CD4-positive, alpha-beta memory T cell (primary cell): ENCODE measurements at regions of chr9 and their contacts with region 1.

Region 1: GRCh38 chr9:107465467-107466451 is 23.8 kb downstream of the KLF4 start:
- DNase-seq: no peak
- H3K4me3 ChIP-seq: no peak overlapping the region
- H3K4me3 Mint-ChIP-seq: peak overlapping the region; percentile 8 to 65 (median 52)
- H3K27ac ChIP-seq: no peak overlapping the region
- H3K27ac Mint-ChIP-seq: no peak overlapping the region
- H3K4me1 ChIP-seq: no peaks in the 10 kb centered on the region
- H3K4me1 Mint-ChIP-seq: peaks cover 0 to 10% (median 5%) of the 10 kb centered on the region in 4 donors
- H3K27me3 ChIP-seq: no peaks in the 10 kb centered on the region
- H3K27me3 Mint-ChIP-seq: peaks cover 31 to 34% of the 10 kb centered on the region in 2 donors

Region 2: DNA sequence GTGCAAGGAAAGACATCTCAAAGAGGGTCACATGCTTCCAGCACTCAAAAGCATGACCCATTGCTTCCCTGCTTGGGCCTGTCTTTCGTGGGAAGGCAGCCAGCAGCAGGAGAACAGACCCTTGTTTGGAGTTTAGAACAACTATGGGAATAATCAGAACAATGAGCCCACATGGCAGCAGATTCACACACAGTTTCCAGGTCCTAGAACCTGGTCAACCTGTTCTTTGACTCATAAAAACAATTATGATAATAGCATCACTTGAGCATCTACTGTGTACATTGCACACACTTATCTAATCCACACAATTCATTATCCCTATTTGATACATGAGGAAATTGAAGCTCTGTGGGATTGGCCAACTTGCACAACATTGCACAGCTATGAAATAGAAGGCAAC is 17.9 kb before region 1 on chr9:
- CTCF ChIA-PET with region 1: no interaction called
- POLR2A ChIA-PET with region 1: no interaction called
- intact Hi-C with region 1: no loop called
- DNase-seq: no peak
- H3K4me3 ChIP-seq: no peak overlapping the region
- H3K4me3 Mint-ChIP-seq: no peak overlapping the region
- H3K27ac ChIP-seq: no peak overlapping the region
- H3K27ac Mint-ChIP-seq: no peak overlapping the region
- H3K4me1 ChIP-seq: no peaks in the 10 kb centered on the region
- H3K4me1 Mint-ChIP-seq: no peaks in the 10 kb centered on the region
- H3K27me3 ChIP-seq: no peaks in the 10 kb centered on the region
- H3K27me3 Mint-ChIP-seq: peaks cover 0 to 3% of the 10 kb centered on the region in 2 donors

Region 3: DNA sequence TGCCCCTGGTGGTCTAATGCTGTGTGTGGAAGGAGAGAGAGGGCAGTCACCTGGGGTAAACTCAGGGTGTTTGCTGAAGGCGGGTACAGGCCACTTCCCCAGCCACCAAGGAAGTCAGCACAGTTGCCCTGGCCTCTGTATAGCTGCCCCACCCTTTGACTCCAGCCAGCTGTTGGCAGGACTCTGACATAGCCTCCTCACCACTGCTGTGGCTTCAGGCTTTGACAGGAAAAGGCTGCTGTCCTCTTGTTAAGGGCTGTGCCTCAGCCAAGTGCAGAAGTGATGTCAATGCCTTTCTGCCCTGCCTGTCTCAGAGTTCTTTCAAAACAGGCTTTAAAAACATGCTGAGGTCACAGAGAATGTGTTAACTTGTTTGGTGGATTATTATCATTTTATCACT is 511.0 kb after region 1 on chr9:
- CTCF ChIA-PET with region 1: no interaction called
- POLR2A ChIA-PET with region 1: no interaction called
- intact Hi-C with region 1: no loop called
- DNase-seq: no peak
- H3K4me3 ChIP-seq: no peak overlapping the region
- H3K4me3 Mint-ChIP-seq: no peak overlapping the region
- H3K27ac ChIP-seq: no peak overlapping the region
- H3K27ac Mint-ChIP-seq: no peak overlapping the region
- H3K4me1 ChIP-seq: no peaks in the 10 kb centered on the region
- H3K4me1 Mint-ChIP-seq: no peaks in the 10 kb centered on the region
- H3K27me3 ChIP-seq: no peaks in the 10 kb centered on the region
- H3K27me3 Mint-ChIP-seq: no peaks in the 10 kb centered on the region

Region 4: DNA sequence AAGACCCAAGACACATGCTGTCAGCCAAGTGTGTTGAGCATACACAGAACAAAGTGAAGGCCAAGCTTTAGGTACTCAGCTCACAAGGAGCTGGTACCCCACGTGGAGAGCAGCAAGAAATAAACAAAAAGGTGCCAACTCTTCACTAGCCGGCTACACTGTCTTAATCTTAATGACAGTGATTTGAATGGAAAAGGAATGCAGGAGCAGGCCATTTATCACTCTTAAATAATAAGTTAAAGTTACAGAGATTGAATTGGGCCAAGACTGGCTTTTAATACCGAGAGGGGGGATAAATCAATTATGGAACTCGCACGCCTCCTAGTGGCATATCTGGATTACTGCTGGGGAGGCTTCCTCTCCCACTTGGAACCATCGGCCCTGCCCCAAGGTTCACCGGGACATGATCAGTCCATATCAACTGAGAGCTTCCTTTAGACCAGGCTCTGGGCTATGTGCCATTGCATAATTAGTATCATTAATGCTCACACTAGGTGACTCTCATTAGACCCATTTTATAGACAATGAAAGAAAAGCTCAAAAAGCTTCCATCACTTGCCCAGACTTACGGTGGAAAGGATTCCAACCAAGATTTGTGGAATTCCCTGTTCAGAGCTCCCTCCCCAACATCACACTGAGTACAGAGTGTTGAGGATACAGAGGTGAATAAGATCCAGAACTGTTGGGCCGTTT is 1296.0 kb after region 1 on chr9:
- CTCF ChIA-PET with region 1: no interaction called
- POLR2A ChIA-PET with region 1: no interaction called
- intact Hi-C with region 1: loop called (anchors 10 kb)
- DNase-seq: peak in 4 of 5 donors; percentile 4 to 10 (median 5)
- H3K4me3 ChIP-seq: no peak overlapping the region
- H3K4me3 Mint-ChIP-seq: no peak overlapping the region
- H3K27ac ChIP-seq: no peak overlapping the region
- H3K27ac Mint-ChIP-seq: no peak overlapping the region
- H3K4me1 ChIP-seq: no peaks in the 10 kb centered on the region
- H3K4me1 Mint-ChIP-seq: peaks cover 0 to 5% (median 1%) of the 10 kb centered on the region in 4 donors
- H3K27me3 ChIP-seq: no peaks in the 10 kb centered on the region
- H3K27me3 Mint-ChIP-seq: peaks cover 3 to 6% of the 10 kb centered on the region in 2 donors